ENCODE measurements at regions of chr9 and their contacts with region 1.

Region 1: DNA sequence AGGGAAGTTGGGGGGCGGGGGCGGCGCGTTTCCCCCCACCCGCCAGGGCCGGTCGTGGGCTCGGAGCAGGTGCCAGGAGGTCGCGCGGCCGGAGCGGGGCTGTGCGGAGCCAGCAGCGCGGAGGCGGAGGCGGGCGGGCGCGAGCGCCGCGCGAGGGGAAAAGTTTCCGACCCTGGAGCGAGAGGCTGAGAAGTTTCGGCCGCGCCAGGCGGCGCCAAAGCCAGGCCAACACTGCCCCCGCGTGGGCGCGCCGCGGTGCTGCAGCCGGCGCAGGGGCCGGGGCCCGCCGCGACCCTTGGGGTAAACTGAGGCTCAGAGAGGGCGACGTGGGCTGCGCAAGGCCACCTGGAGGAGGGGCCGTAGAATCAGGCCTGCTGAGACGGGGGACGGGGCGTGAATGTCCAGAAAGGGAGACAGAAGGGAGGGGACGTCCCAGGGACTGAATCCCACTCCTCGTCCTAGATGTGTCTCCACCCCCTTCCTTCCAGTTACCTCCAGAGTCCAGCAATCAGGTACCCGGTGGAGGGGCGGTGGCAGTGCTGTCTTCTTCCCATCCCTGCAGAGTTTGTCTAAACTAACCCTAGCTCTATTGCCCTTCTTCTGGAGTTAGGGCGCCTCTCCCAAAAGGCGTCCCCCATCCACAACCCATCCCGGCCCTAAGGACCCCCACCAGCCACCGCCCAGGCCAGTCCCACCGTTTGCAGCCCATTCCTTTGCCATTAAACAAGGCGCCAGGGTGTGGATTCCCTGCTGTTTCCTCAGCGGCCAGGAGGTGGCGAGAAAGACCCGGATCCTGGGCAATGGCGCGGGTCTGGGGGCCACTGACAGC is 10.2 kb downstream of the C9orf50 start:
- DNase-seq: peak; percentile 68 to 81
- ATAC-seq: peak; percentile 36

Region 2: DNA sequence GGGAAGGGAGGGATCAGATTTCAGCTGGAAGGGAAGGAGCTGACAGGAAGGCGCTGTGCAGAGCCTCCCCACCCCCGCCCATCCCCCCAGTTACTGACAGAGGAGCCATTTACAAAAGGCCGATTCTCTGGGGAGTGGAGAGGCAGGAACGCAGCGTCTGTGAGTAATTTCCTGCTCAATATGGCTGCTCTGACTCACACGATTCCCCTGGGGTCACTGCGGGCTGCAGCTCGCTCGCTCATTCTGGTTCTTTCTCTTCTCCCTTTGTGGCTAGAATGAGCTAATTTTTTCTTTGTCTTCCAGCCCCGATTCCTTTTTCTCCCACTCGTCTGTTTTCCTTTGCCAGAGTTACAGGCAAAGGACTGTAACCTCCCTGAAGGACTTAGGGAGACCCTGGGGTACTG is 470.7 kb before region 1 on chr9:
- intact Hi-C with region 1: loop called (anchors 5 kb)
- DNase-seq: peak; percentile 84 to 93
- ATAC-seq: peak; percentile 80

Region 3: GRCh38 chr9:129177791-129178559 is 432.7 kb before region 1 on chr9 and contains the start of gene IER5L:
- intact Hi-C with region 1: loop called in 1 of 2 experiments (anchors 10 kb)
- DNase-seq: peak; percentile 95 to 96
- ATAC-seq: peak; percentile 67
- total RNA-seq, gene IER5L: 4.3 to 8.8 TPM

Region 4: GRCh38 chr9:129476821-129477611 is 133.7 kb before region 1 on chr9:
- intact Hi-C with region 1: no loop called
- DNase-seq: no peak
- ATAC-seq: no peak

Region 5: DNA sequence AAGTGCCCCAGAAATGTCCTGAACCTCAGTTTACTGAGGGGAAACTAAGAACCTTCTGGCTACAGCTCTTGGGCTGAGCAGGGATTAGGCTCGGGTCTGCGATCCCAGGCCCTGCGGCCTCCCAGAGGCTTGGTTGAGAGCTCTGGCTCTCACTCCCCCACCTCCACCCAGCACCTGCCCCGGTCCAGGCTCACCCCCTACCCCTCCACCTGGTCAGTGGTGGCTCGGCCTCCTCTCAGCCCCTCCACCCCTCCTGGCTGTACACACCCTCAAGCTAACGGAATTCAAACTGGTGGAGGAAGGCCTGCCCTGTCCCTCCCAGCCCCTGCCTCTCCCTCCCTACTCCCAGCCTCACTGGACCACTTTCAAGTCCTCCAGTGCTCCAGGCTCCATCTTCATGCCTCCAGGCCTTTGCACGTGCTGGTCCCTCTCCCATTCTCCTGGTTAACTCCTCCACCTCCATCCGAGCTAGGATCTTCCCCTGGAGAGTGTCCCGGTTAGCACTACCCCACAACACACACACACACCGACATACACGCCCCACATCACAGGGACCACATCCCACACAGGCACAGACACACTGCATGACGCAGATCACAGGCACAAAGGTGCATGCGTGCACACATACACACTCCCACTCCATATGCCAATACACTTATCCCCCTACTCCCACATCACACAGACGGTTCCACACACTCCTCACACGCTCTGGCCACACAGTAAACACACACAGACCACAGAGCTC is 120.7 kb before region 1 on chr9:
- intact Hi-C with region 1: loop called (anchors 5 to 10 kb)
- DNase-seq: peak; percentile 33 to 50
- ATAC-seq: no peak

Region 6: GRCh38 chr9:129569502-129570449 is 40.9 kb before region 1 on chr9:
- intact Hi-C with region 1: no loop called
- DNase-seq: peak in 1 of 2 donors; percentile 25
- ATAC-seq: peak; percentile 80

Region 7: DNA sequence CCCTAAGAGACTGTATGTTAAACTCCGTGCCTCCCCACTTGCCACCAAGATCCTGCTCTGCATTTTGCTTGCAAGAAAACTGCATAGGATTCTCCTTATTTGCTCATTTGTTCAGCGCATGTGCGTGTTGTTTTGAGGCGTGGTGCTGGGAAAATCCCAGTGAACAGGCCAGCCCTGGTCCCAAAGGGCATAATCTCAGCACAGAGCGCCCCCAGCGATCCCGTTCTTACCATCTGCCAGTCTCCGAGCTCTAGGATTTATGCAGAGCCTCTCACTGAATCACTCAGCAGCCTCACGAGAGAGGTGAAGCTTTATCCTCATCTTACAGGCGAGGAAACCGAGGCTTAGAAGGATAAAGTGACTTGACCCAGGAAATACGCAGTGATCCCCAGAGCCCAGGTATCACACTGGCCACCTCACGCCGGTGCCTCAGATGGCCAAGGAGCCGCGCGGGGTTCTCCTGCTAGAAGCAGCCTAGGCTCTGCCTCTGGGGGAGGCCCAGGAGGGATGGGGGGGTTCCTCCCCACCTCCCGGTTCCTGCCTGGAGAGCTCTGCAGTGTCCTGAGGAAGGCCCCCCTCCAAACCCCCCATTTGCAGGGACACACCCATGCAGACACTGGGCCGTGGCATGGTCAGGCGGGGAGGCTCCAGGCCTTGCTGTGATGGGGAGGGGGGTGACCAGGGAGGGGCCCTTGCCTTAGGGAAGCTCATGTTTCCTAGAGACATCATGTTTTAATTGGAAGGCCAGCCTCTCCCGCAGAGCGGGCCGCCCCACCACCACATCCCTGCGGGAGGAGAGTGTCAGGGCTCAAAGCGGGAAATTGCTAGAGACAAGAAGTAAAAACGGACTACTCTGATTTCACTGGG is 66.5 kb after region 1 on chr9:
- intact Hi-C with region 1: no loop called
- DNase-seq: no peak
- ATAC-seq: peak; percentile 42

Measured in left colon (tissue), 2 donors.